Left cardiac atrium (tissue), 4 donors: ENCODE measurements at regions of chr10 and their contacts with region 1.

Region 1: GRCh38 chr10:117216611-117217195 is 19.4 kb downstream of the KCNK18 start:
- DNase-seq: peak; percentile 68
- ATAC-seq: peak; percentile 88

Region 2: GRCh38 chr10:117320050-117320665 is 103.5 kb after region 1 on chr10:
- intact Hi-C with region 1: loop called (anchors 5 to 10 kb)
- DNase-seq: no peak
- ATAC-seq: no peak

Region 3: DNA sequence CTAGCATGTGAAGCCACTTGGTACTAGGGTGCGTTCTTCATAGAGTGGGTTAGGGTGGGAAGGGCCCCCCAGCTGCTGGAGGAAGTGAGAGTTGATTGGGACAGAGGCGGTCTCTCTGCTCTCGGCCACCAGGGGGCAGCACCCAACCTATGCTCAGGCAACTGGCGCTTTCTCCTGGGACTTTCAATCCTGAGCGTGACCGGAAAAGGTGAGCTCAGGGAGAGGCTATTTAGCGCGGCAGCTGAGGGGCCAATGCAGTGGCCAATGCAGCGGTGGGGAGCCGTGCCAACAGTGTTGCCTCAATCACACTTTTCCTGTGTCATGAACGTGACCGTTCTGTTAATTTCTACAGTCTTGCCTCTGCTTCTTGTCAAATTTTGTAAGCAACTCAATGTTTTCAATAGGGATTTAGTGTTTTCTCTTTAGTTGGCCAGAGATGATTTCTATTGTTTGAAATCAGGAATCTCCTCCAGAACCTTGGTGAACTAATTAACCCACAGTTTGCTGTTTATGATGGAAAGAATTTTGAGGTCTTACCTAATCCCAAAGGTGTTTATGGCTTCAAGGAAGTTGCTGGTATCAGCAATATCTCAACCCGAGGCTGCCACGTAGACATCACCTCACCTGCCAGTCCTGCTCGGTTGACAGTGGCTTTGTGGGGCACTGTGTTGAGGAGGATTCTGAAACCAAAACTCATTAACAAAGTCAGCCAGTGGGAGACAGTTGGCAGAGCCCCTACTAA is 226.4 kb after region 1 on chr10:
- intact Hi-C with region 1: loop called in 1 of 2 experiments (anchors 10 kb)
- DNase-seq: peak; percentile 79
- ATAC-seq: peak; percentile 72 to 75

Region 4: DNA sequence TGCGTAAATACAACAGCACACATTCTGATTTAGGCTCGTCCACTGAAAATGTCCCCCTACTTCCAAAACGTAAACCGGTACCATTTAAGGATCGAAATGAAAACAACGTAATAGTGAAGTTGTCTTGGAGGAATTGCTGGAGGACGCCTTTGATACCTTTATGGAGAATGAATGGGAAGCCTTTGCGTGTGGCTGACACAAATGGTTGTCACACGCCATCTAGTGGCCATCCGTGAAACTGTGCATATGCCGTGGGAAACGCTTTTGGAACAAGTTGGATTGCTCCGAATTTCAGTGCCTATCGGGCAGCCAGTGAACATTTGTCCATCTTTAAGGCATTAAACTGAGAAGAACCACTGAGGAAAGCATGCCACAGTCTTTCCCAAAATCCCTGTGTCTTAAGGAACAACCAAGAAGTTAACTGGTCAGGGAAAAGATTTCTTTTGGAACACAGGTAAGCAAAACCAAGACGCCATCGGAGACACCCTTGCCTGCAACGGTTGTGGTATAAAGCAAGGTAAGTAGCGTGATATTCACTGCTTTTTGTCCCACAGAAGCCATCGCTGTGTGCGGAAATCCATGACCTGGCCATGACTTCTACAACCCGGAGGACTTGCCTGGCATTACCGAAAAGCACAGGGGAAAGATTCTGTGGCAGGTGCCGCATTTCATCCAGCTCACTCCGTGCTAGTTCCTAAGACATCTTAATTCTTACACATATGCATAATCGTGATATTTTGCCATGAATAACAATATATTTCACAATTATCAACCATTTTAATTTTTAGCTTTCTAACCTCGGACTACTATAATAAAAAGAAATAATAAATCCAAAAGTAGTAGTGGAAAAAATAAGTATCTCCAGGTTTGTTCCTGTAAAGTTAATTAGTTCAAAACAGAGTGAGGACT is 1024.8 kb after region 1 on chr10:
- intact Hi-C with region 1: loop called in 1 of 2 experiments (anchors 10 kb)
- DNase-seq: peak; percentile 77
- ATAC-seq: peak; percentile 73

Region 5: GRCh38 chr10:118459726-118460193 is 1243.1 kb after region 1 on chr10:
- intact Hi-C with region 1: loop called in 1 of 2 experiments (anchors 5 kb)
- DNase-seq: peak; percentile 29
- ATAC-seq: peak; percentile 55 to 82